Mammary epithelial cell (primary cell): ENCODE measurements at regions of chr19 and their contacts with region 1.

Region 1: DNA sequence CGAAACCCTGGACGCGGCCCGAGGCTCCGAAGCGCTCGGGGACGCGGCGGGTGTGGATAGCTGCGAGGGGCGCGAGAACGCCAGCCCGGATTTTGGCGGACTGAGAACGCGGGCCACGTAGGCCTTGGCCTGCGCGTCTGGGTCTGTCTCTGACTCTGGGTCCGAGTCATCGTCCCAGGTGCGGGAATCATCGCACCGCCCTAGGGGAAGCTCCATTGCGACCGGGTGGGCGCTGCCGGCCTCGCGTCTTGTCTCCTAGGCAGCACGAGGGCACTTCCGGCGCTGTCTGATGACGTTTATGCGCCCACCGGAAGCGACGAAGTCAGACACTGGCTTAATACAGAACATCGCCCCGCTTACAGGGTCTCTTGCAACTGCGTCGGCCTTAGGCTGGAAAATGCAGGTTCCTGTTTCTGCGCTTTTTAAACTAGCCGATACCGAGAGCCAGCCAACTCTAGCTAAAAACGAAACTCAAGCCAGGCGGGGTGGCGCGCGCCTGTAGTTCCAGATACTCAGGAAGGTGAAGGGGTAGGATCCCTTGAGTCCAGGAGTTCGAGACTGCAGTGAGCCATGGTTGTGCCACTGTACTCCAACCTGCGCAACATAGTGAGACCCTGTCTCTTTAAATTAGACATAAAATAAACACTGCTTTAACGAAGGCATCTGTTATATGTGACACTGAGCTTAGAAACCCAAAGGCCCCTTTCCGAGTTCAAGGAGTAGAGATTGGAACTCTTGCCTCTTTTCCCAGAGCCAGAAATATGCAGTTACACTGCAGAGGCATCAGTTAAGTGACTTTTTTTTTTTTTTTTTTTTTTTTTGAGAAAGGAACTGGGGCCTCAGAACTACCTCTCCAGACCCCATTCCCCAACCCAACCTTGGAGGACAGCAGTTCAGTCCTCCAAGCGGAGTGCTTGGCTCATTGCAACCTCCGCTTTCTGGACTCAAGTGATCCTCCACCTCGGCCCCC is at the start of gene FBXW9:
- DNase-seq: peak; percentile 88
- H3K4me3 ChIP-seq: peak within 1 kb of the TSS; percentile 64 to 94 (median 68)
- H3K27ac ChIP-seq: peak within 1 kb of the TSS; percentile 58
- H3K4me1 ChIP-seq: peaks cover 9% of the 10 kb centered on the region
- H3K27me3 ChIP-seq: no peaks in the 10 kb centered on the region
- CTCF ChIP-seq: no peak
- total RNA-seq, gene FBXW9: 13.7 to 14.8 TPM

Region 2: DNA sequence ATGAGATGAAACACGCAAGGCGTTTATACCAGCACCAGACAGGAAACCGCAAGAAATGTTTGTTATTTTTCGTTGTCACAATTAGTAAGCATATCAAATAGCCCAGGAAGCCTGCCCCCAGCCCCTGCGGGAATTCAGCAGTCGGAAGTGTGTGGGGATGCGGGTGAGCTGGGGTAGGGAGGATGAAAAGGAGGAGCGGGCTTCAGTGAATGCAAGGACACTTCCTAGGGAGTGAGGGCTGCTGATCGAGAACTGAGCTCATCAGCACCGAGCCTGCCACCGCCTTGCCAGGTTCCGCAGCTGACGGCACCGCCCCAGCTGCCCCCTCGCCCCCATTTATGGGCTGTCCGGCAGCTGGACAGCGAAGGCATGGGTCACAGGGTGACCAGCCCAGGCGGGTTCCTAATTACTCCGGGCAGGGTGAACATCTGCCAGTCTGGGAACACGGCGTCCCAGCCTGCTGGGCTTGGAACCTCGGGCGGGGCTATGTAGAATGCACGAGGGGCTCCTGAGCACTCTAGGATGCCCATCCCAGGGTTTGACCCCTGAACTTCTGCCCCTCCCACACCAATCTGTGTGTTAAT is 53.4 kb after region 1 on chr19:
- CTCF ChIA-PET with region 1: no interaction called
- dilution Hi-C with region 1: loop called (anchors 10 kb)
- in situ Hi-C with region 1: no loop called
- intact Hi-C with region 1: no loop called
- DNase-seq: no peak
- H3K4me3 ChIP-seq: no peak overlapping the region
- H3K27ac ChIP-seq: no peak overlapping the region
- H3K4me1 ChIP-seq: peaks cover 17% of the 10 kb centered on the region
- H3K27me3 ChIP-seq: no peaks in the 10 kb centered on the region
- CTCF ChIP-seq: no peak

Region 3: DNA sequence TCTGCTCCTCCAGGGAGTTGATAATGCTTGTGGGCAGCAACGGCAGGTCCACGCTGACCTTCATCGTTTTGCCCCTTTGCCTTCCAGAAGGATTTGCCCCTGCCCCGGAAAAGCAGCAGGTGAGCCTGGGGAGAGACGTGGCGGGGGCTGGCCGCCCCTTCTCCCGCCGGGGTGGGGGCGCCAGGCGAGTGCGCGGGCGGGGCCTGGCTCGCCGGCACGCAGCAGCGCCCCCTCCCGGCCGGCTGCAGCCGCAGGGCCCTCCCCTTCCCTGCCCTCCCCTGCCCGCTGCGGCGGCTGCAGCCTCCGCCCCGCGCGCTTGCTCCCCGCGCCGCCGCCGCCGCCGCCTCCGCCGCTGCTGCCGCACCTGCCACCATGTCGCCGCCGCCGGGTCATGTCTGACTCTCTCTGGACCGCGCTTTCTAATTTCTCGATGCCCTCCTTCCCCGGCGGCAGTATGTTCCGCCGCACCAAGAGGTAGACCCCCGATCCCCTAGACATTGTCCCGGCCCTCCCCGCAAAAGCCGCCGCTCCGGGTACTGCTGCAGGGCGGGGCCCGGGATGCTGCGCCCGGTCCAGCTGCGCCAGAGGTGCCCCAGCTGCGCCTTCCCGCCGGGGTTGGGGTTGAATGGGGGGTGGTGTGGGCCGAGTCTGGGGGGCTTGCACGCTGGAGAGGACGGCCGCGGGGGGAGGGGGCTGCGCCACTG is 141.7 kb after region 1 on chr19 and contains the start of gene MAST1:
- CTCF ChIA-PET with region 1: no interaction called
- dilution Hi-C with region 1: loop called (anchors 5 kb)
- in situ Hi-C with region 1: no loop called
- intact Hi-C with region 1: no loop called
- DNase-seq: no peak
- H3K4me3 ChIP-seq: peak within 1 kb of the TSS in 1 of 3 experiments; percentile 40
- H3K27ac ChIP-seq: no peak within 1 kb of the TSS
- H3K4me1 ChIP-seq: peaks cover 14% of the 10 kb centered on the region
- H3K27me3 ChIP-seq: peaks cover 14% of the 10 kb centered on the region
- CTCF ChIP-seq: peak in 1 of 2 donors; percentile 18
- total RNA-seq, gene MAST1: 0.50 to 2.2 TPM